ENCODE measurements at regions of chr7 and their contacts with region 1.

Region 1: DNA sequence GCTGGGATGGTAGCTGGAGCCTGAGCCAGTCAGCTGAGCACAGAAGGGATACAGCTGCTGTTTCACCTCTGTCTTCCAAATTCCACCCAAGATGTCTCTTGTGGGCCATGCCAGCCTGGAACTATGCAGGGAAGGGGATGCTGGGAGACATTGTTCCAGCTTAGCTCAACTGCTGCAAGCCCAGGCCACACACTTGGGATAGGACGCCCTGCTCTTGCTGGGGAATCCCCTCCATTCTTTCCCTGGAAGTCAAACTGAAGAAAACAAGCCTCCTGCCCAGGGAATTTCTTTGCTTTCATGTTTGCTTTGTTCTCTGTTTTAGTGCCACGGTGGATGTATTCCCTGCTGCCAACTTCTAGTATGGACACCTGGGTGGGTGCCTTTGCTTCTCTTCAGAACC is 55.2 kb upstream of the CDK13 start:
- DNase-seq: no peak
- ATAC-seq: no peak
- H3K4me3 ChIP-seq: no peak overlapping the region
- H3K4me1 ChIP-seq: no peaks in the 10 kb centered on the region
- CTCF ChIP-seq: no peak

Region 2: GRCh38 chr7:40057292-40057691 is 162.4 kb after region 1 on chr7:
- intact Hi-C with region 1: loop called (anchors 5 to 10 kb)
- DNase-seq: peak in 1 of 3 donors; percentile 64
- ATAC-seq: peak; percentile 90
- H3K4me3 ChIP-seq: no peak overlapping the region
- H3K4me1 ChIP-seq: no peaks in the 10 kb centered on the region
- CTCF ChIP-seq: no peak

Measured in mucosa of descending colon (tissue), 3 donors.